ENCODE measurements at regions of chr21 and their contacts with region 1.

Region 1: DNA sequence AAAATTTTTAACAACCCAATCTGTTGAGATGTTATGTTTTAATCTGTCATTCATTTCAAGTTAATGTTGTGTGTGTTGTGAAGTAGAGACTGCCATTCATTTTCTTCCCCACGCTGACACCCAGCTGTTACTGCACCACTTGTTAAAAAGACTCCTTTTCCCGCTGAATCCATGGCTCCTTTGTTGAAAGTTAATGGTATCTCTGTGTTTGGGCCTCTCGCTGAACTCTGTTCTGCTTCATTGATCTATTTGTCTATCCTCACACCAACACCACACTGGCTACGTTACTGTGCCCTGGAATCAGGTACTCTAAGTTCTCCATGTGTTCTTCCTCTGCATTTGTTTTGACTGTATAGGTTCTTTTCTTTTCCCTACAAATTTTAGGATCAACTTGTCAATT is 58.2 kb downstream of the PDE9A start:
- DNase-seq: no peak
- ATAC-seq: no peak
- H3K4me3 ChIP-seq: no peak overlapping the region
- H3K27ac ChIP-seq: no peak overlapping the region
- H3K4me1 ChIP-seq: no peaks in the 10 kb centered on the region
- H3K27me3 ChIP-seq: peaks cover 0 to 8% (median 0%) of the 10 kb centered on the region in 9 donors
- CTCF ChIP-seq: no peak
- POLR2A ChIP-seq: no peak

Region 2: GRCh38 chr21:41752231-41752681 is 959.4 kb before region 1 on chr21:
- intact Hi-C with region 1: no loop called
- DNase-seq: no peak
- ATAC-seq: peak in 1 of 4 donors; percentile 10
- H3K4me3 ChIP-seq: no peak overlapping the region
- H3K27ac ChIP-seq: no peak overlapping the region
- H3K4me1 ChIP-seq: peaks cover 0 to 6% (median 0%) of the 10 kb centered on the region in 12 donors
- H3K27me3 ChIP-seq: peaks cover 0 to 15% (median 0%) of the 10 kb centered on the region in 9 donors
- CTCF ChIP-seq: no peak
- POLR2A ChIP-seq: no peak

Region 3: DNA sequence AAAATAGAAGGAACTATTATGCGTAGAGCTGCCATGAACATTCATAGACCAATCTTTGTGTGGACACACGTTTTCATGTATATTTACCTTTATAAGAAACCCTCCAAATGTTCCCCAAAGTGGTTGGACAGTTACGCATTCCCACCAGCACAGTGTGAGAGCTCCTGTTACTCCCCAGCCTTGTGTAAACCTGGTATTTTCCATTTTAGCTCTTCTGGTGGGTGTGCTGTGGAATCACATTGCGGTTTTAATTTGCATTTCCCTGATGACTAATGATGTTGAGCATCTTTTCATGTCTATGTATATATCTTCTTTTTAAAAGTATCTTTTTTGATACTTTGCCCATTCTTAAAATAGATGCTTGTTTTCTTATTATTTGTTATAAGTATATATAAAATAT is 311.1 kb before region 1 on chr21:
- intact Hi-C with region 1: no loop called
- DNase-seq: no peak
- ATAC-seq: no peak
- H3K4me3 ChIP-seq: no peak overlapping the region
- H3K27ac ChIP-seq: no peak overlapping the region
- H3K4me1 ChIP-seq: no peaks in the 10 kb centered on the region
- H3K27me3 ChIP-seq: peaks cover 0 to 9% (median 0%) of the 10 kb centered on the region in 9 donors
- CTCF ChIP-seq: no peak
- POLR2A ChIP-seq: no peak

Region 4: GRCh38 chr21:42486531-42486930 is 225.1 kb before region 1 on chr21:
- intact Hi-C with region 1: loop called in 1 of 10 experiments (anchors 10 kb)
- DNase-seq: no peak
- ATAC-seq: no peak
- H3K4me3 ChIP-seq: no peak overlapping the region
- H3K27ac ChIP-seq: no peak overlapping the region
- H3K4me1 ChIP-seq: no peaks in the 10 kb centered on the region
- H3K27me3 ChIP-seq: peaks cover 0 to 11% (median 0%) of the 10 kb centered on the region in 9 donors
- CTCF ChIP-seq: no peak
- POLR2A ChIP-seq: no peak

Region 5: GRCh38 chr21:42818328-42818749 is 106.7 kb after region 1 on chr21:
- intact Hi-C with region 1: loop called in 1 of 10 experiments (anchors 10 kb)
- DNase-seq: peak; percentile 37 to 84 (median 60)
- ATAC-seq: peak in 3 of 4 donors; percentile 67 to 87 (median 85)
- H3K4me3 ChIP-seq: no peak overlapping the region
- H3K27ac ChIP-seq: no peak overlapping the region
- H3K4me1 ChIP-seq: no peaks in the 10 kb centered on the region
- H3K27me3 ChIP-seq: peaks cover 0 to 10% (median 0%) of the 10 kb centered on the region in 9 donors
- CTCF ChIP-seq: peak; percentile 76 to 94 (median 87)
- POLR2A ChIP-seq: no peak